ENCODE measurements at regions of chr15 and their contacts with region 1.

Region 1: DNA sequence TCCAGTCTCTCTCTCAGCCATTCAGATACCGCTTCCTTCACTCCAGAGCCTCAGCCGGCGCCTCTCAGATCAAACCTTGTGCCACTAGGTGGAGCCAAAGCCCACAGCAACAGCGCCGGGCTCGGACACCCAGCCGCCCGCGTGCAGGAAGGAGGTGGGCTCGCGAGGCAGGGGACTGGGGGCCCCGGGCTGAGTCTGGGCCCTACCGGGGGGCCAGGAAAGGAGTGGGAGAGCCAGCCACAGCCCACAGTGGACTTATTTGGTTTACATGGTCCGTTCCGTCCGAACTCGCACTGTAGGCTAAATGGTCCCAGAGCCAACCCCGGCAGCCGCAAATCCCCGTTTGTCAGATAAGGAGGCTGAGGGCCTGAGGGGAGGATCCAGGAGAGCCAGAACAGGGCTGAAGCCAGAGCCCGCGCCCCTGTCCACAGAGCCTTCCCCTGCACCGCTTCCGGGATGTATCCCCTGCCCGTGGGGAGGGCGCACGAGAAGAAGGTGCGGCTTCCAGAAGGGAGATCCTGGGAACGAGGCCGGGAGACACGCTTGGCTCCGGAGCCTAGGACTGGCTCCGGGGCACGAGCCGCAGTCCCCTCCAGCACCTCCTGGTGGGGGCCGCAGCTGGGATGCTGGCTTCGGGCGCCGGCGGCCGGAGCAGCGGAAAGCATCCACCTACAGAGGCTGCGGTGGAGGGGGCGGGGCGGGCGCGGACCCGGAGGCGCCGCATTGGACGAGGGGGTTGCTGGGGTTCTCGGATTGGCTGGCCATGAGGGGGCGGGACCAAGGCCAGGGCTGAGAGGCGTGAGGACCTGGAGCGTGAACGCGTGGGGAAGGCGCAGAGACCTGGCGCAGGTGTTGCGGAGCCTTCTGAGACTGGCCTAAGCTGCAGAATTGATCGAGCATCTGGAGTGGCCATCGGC is 6.5 kb upstream of the CYP11A1 start:
- DNase-seq: peak; percentile 91
- H3K4me3 ChIP-seq: peak overlapping the region; percentile 58 to 79 (median 68)
- H3K27ac ChIP-seq: no peak overlapping the region
- H3K4me1 ChIP-seq: peaks cover 20% of the 10 kb centered on the region
- H3K27me3 ChIP-seq: no peaks in the 10 kb centered on the region
- CTCF ChIP-seq: peak; percentile 80 to 89

Region 2: DNA sequence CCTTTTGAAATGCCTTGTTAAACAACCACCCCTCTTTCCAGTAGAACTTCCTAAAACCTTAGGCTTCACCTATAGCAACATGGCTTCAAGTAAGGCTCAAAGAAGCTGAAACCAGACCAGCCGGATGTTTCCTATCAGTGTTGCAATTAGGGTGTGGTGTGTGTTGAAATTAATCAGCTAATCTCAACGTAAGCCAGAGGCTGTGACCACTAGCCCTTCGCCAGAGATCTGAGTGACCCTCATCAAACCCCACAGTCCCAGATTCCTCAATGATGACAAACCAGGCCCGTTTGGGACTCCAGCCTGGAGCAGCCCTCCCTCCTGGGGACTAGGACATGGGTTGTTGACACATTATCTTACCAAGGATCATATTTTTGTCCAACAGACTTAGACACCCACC is 33.9 kb before region 1 on chr15:
- CTCF ChIA-PET with region 1: no interaction called
- dilution Hi-C with region 1: no loop called
- in situ Hi-C with region 1: no loop called
- intact Hi-C with region 1: no loop called
- DNase-seq: peak; percentile 11
- H3K4me3 ChIP-seq: no peak overlapping the region
- H3K27ac ChIP-seq: no peak overlapping the region
- H3K4me1 ChIP-seq: no peaks in the 10 kb centered on the region
- H3K27me3 ChIP-seq: no peaks in the 10 kb centered on the region
- CTCF ChIP-seq: no peak

Region 3: GRCh38 chr15:74417246-74417645 is 43.3 kb after region 1 on chr15:
- CTCF ChIA-PET with region 1: no interaction called
- dilution Hi-C with region 1: loop called (anchors 5 kb)
- in situ Hi-C with region 1: no loop called
- intact Hi-C with region 1: no loop called
- DNase-seq: peak; percentile 57
- H3K4me3 ChIP-seq: no peak overlapping the region
- H3K27ac ChIP-seq: peak overlapping the region; percentile 42
- H3K4me1 ChIP-seq: peaks cover 69% of the 10 kb centered on the region
- H3K27me3 ChIP-seq: no peaks in the 10 kb centered on the region
- CTCF ChIP-seq: no peak

Region 4: DNA sequence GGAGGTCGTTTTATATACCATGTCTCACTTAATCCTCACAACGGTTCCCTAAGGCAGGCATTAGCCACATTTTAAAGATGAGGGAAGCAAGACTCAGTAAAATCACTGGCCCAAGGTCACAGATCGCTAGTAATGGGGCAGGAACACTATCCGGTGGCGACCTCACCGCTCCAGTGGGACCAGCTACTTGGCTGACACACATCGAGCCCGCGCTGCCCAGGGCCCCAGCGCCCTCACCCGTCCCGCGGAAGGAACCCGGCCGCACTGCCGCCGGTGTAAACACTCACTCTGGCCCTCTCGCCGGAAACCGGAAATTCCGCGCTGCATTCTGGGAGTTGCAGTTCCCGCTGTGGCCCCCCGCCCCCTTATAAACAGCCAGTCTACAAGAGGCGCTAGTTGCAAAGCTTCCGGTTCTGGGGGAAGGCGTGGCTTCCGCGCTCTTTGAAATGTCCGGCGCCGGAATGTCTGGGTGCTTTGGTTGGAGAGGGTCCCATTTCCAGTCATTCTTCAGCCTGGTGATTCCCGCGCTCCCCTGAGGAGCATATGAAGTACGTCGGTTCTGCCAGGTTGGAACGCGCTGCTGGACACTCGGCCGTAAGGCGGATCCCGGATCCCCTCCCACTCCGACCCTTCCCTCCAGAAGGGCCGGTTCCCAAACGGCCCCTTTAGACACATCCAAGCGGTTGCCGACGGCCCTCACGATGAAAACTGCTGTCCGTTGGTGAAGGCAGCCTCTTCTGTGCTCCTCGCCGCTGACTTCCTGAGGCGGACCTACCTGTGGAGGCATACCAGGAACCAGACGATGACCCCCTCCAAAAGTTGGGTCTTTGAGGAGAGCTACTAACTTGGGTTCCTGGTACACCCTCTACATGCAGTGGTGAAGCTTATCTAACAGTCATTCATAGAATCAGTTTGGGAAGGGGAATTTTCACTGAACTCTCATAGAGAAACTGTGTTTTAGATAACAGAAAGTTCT is 87.2 kb after region 1 on chr15 and contains the start of gene UBL7:
- CTCF ChIA-PET with region 1: no interaction called
- dilution Hi-C with region 1: loop called (anchors 5 kb)
- in situ Hi-C with region 1: no loop called
- intact Hi-C with region 1: no loop called
- DNase-seq: peak; percentile 97
- H3K4me3 ChIP-seq: peak within 1 kb of the TSS; percentile 63 to 96 (median 94)
- H3K27ac ChIP-seq: peak within 1 kb of the TSS; percentile 82
- H3K4me1 ChIP-seq: peaks cover 13% of the 10 kb centered on the region
- H3K27me3 ChIP-seq: no peaks in the 10 kb centered on the region
- CTCF ChIP-seq: peak in 1 of 2 donors; percentile 39
- total RNA-seq, gene UBL7: 36.4 to 41.7 TPM

Region 5: GRCh38 chr15:74540761-74541493 is 166.9 kb after region 1 on chr15 and contains the start of gene ARID3B:
- CTCF ChIA-PET with region 1: no interaction called
- dilution Hi-C with region 1: no loop called
- in situ Hi-C with region 1: loop called in 1 of 2 experiments (anchors 10 kb)
- intact Hi-C with region 1: loop called (anchors 2 kb)
- DNase-seq: peak; percentile 96
- H3K4me3 ChIP-seq: peak within 1 kb of the TSS; percentile 86 to 95 (median 95)
- H3K27ac ChIP-seq: peak within 1 kb of the TSS; percentile 90
- H3K4me1 ChIP-seq: peaks cover 39% of the 10 kb centered on the region
- H3K27me3 ChIP-seq: no peaks in the 10 kb centered on the region
- CTCF ChIP-seq: no peak
- total RNA-seq, gene ARID3B: 7.0 to 12.8 TPM

Region 6: GRCh38 chr15:74620636-74621545 is 246.9 kb after region 1 on chr15:
- CTCF ChIA-PET with region 1: interaction called, 9 read pairs
- dilution Hi-C with region 1: no loop called
- in situ Hi-C with region 1: loop called in 1 of 2 experiments (anchors 5 kb)
- intact Hi-C with region 1: loop called (anchors 1 kb)
- DNase-seq: peak; percentile 73
- H3K4me3 ChIP-seq: no peak overlapping the region
- H3K27ac ChIP-seq: no peak overlapping the region
- H3K4me1 ChIP-seq: peaks cover 30% of the 10 kb centered on the region
- H3K27me3 ChIP-seq: no peaks in the 10 kb centered on the region
- CTCF ChIP-seq: peak; percentile 99 to 100

Region 7: DNA sequence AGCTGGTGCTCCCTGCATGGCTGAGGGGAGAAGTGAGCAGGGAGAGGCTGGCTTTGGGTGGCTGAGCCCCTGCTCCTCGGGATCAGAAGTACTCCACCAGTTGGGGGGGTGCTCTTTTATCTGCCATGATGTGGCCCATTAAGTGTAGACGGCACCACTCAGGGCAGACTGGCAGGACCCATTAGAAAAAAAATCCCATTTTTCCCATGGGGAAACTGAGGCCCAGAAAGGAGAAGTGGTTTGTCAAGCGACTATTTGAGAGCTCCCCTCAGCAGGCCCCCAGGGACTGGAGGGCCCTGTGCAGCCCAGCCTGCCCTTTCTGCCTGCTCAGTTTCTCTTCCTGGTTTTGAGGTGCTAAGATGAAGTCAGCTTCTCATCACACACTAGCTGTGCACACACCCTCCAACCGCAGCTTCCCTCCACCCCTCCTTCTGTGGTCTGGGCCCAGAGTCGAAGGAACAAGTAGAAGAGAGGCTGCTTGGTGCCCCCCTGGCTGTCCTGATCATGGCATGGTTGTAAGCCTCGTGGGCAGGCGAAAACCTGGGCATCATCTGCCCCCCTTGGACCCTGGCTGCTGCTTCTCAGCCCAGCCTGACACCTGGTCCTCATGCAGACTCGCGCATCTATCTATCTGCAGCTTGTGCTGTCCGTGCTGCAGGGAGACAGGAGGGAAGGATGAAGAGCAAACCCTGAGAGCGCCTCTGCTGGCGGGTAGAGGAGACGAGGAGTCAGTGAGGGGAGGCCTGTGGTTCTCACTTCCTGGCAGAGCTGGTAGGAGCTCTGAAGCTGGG is 413.5 kb after region 1 on chr15:
- CTCF ChIA-PET with region 1: no interaction called
- dilution Hi-C with region 1: no loop called
- in situ Hi-C with region 1: no loop called
- intact Hi-C with region 1: no loop called
- DNase-seq: peak; percentile 55
- H3K4me3 ChIP-seq: no peak overlapping the region
- H3K27ac ChIP-seq: no peak overlapping the region
- H3K4me1 ChIP-seq: peaks cover 58% of the 10 kb centered on the region
- H3K27me3 ChIP-seq: no peaks in the 10 kb centered on the region
- CTCF ChIP-seq: peak; percentile 10 to 18

Region 8: DNA sequence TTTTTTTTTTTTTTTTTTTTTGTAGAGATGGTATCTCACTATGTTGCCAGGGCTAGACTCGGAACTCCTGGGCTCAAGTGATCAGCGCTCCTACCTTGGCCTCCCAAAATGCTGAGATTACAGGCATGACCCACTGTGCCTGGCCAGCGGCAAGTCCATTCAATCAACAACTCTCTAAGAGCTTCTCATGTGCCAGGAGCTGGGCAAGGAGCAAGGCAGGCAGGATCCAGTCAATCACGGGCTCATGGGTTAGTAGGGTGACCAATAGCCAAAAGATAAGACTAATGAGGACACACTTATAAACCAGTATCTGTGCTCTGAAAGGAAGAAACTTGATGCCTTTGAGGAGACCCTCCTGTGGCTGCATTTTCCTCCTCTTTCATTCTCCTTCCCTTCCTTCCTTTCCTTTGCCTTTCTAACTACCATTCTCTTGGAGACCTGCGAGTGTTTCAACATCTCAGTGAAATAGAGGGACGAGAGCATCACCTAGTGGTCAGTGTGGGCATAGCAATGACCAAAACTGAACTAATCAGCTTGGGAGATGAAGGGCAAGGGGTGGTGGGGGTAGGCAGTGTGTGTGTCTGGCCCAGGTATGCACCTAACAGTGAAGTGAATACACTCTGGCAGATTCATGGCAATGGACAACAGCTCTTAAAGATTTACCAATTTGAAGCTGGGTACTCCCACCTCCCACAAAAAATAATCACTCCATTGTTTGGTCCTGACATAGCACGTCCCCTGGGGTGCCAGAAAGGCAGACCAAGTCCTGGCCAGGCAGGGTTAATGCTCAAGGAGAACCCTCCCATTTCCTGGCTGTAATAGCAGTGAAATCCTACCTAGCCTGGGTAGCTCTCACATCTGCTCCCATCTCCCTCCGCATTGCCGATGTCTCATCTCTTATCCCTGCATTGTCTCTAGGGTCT is 576.4 kb after region 1 on chr15:
- CTCF ChIA-PET with region 1: no interaction called
- dilution Hi-C with region 1: no loop called
- in situ Hi-C with region 1: no loop called
- intact Hi-C with region 1: loop called (anchors 2 kb)
- DNase-seq: peak; percentile 59
- H3K4me3 ChIP-seq: no peak overlapping the region
- H3K27ac ChIP-seq: no peak overlapping the region
- H3K4me1 ChIP-seq: no peaks in the 10 kb centered on the region
- H3K27me3 ChIP-seq: no peaks in the 10 kb centered on the region
- CTCF ChIP-seq: peak; percentile 99 to 100

Measured in mammary epithelial cell (primary cell).